ENCODE measurements at regions of chr2 and their contacts with region 1.

Region 1: GRCh38 chr2:47906157-47907038 is at the start of gene FBXO11:
- DNase-seq: peak; percentile 97
- ATAC-seq: peak; percentile 82
- H3K4me3 ChIP-seq: peak within 1 kb of the TSS; percentile 54 to 97 (median 95)
- H3K4me3 Mint-ChIP-seq: peak within 1 kb of the TSS; percentile 88
- H3K27ac ChIP-seq: peak within 1 kb of the TSS; percentile 83 to 91
- H3K27ac Mint-ChIP-seq: peak within 1 kb of the TSS; percentile 91
- H3K4me1 ChIP-seq: peaks cover 13 to 24% of the 10 kb centered on the region in 2 donors
- H3K4me1 Mint-ChIP-seq: peaks cover 37% of the 10 kb centered on the region
- H3K27me3 ChIP-seq: no peaks in the 10 kb centered on the region
- H3K27me3 Mint-ChIP-seq: no peaks in the 10 kb centered on the region
- CTCF ChIP-seq: no peak
- total RNA-seq, gene FBXO11: 107 and 117 TPM in 2 replicates

Region 2: GRCh38 chr2:47724221-47724981 is 182.0 kb before region 1 on chr2:
- CTCF ChIA-PET with region 1: no interaction called
- POLR2A ChIA-PET with region 1: no interaction called
- intact Hi-C with region 1: loop called (anchors 5 kb)
- DNase-seq: peak; percentile 94
- ATAC-seq: peak; percentile 88
- H3K4me3 ChIP-seq: peak overlapping the region in 1 of 5 experiments; percentile 22
- H3K4me3 Mint-ChIP-seq: peak overlapping the region; percentile 59
- H3K27ac ChIP-seq: peak overlapping the region; percentile 91 to 92
- H3K27ac Mint-ChIP-seq: peak overlapping the region; percentile 94
- H3K4me1 ChIP-seq: peaks cover 58 to 73% of the 10 kb centered on the region in 2 donors
- H3K4me1 Mint-ChIP-seq: peaks cover 69% of the 10 kb centered on the region
- H3K27me3 ChIP-seq: no peaks in the 10 kb centered on the region
- H3K27me3 Mint-ChIP-seq: no peaks in the 10 kb centered on the region
- CTCF ChIP-seq: no peak

Region 3: DNA sequence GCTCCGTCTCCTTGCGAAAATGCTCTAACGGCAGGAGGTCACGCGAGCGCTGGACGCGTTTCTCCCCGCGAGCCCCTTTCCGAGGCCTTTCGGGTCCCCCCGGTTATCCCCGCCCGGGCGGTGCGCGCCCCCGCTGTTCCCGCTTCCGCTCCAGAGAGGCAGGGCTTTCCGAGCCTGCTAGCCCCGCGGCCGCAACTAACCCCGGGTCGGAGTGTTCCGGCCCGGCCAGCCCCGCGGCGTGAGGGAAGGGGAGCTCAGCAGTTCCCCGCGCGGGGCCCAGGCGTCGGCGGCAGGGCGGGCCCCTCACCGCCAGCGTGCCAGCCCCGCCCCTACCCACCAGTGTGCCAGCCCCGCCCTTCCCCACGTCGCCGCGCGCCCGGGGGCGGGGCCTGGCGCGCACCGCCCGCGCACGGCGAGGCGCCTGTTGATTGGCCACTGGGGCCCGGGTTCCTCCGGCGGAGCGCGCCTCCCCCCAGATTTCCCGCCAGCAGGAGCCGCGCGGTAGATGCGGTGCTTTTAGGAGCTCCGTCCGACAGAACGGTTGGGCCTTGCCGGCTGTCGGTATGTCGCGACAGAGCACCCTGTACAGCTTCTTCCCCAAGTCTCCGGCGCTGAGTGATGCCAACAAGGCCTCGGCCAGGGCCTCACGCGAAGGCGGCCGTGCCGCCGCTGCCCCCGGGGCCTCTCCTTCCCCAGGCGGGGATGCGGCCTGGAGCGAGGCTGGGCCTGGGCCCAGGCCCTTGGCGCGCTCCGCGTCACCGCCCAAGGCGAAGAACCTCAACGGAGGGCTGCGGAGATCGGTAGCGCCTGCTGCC is 123.5 kb before region 1 on chr2 and contains the start of gene MSH6:
- CTCF ChIA-PET with region 1: no interaction called
- POLR2A ChIA-PET with region 1: interaction called, 3 read pairs
- intact Hi-C with region 1: loop called (anchors 2 kb)
- DNase-seq: peak; percentile 95
- ATAC-seq: peak; percentile 87
- H3K4me3 ChIP-seq: peak within 1 kb of the TSS; percentile 80 to 98 (median 94)
- H3K4me3 Mint-ChIP-seq: peak within 1 kb of the TSS; percentile 95
- H3K27ac ChIP-seq: peak within 1 kb of the TSS; percentile 74 to 85
- H3K27ac Mint-ChIP-seq: peak within 1 kb of the TSS; percentile 94
- H3K4me1 ChIP-seq: peaks cover 14 to 26% of the 10 kb centered on the region in 2 donors
- H3K4me1 Mint-ChIP-seq: peaks cover 18% of the 10 kb centered on the region
- H3K27me3 ChIP-seq: no peaks in the 10 kb centered on the region
- H3K27me3 Mint-ChIP-seq: no peaks in the 10 kb centered on the region
- CTCF ChIP-seq: no peak
- total RNA-seq, gene MSH6: 43.9 and 46.9 TPM in 2 replicates

Region 4: GRCh38 chr2:48107326-48107925 is 201.0 kb after region 1 on chr2:
- CTCF ChIA-PET with region 1: interaction called, 23 read pairs
- POLR2A ChIA-PET with region 1: interaction called, 12 read pairs
- intact Hi-C with region 1: loop called (anchors 1 kb)
- DNase-seq: peak; percentile 10
- ATAC-seq: no peak
- H3K4me3 ChIP-seq: no peak overlapping the region
- H3K4me3 Mint-ChIP-seq: no peak overlapping the region
- H3K27ac ChIP-seq: no peak overlapping the region
- H3K27ac Mint-ChIP-seq: no peak overlapping the region
- H3K4me1 ChIP-seq: peaks cover 7 to 16% of the 10 kb centered on the region in 2 donors
- H3K4me1 Mint-ChIP-seq: peaks cover 16% of the 10 kb centered on the region
- H3K27me3 ChIP-seq: no peaks in the 10 kb centered on the region
- H3K27me3 Mint-ChIP-seq: no peaks in the 10 kb centered on the region
- CTCF ChIP-seq: no peak

Region 5: GRCh38 chr2:48420512-48421197 is 514.3 kb after region 1 on chr2:
- CTCF ChIA-PET with region 1: no interaction called
- POLR2A ChIA-PET with region 1: no interaction called
- intact Hi-C with region 1: loop called (anchors 2 kb)
- DNase-seq: peak; percentile 89
- ATAC-seq: peak; percentile 93
- H3K4me3 ChIP-seq: no peak overlapping the region
- H3K4me3 Mint-ChIP-seq: peak overlapping the region; percentile 58
- H3K27ac ChIP-seq: no peak overlapping the region
- H3K27ac Mint-ChIP-seq: no peak overlapping the region
- H3K4me1 ChIP-seq: peaks cover 15 to 16% of the 10 kb centered on the region in 2 donors
- H3K4me1 Mint-ChIP-seq: peaks cover 14% of the 10 kb centered on the region
- H3K27me3 ChIP-seq: no peaks in the 10 kb centered on the region
- H3K27me3 Mint-ChIP-seq: no peaks in the 10 kb centered on the region
- CTCF ChIP-seq: peak; percentile 96